MCF 10A (cell line): ENCODE measurements at regions of chr3 and their contacts with region 1.

Region 1: GRCh38 chr3:36444909-36445308 is 64.6 kb downstream of the STAC start:
- DNase-seq: peak; percentile 29
- H3K4me3 Mint-ChIP-seq: no peak overlapping the region
- H3K27ac Mint-ChIP-seq: peak overlapping the region; percentile 94
- H3K4me1 Mint-ChIP-seq: peaks cover 17% of the 10 kb centered on the region
- H3K27me3 Mint-ChIP-seq: no peaks in the 10 kb centered on the region
- CTCF ChIP-seq: no peak

Region 2: GRCh38 chr3:35992041-35992440 is 452.9 kb before region 1 on chr3:
- CTCF ChIA-PET with region 1: no interaction called
- POLR2A ChIA-PET with region 1: no interaction called
- intact Hi-C with region 1: no loop called
- DNase-seq: no peak
- H3K4me3 Mint-ChIP-seq: no peak overlapping the region
- H3K27ac Mint-ChIP-seq: no peak overlapping the region
- H3K4me1 Mint-ChIP-seq: no peaks in the 10 kb centered on the region
- H3K27me3 Mint-ChIP-seq: peaks cover 17% of the 10 kb centered on the region
- CTCF ChIP-seq: no peak

Region 3: DNA sequence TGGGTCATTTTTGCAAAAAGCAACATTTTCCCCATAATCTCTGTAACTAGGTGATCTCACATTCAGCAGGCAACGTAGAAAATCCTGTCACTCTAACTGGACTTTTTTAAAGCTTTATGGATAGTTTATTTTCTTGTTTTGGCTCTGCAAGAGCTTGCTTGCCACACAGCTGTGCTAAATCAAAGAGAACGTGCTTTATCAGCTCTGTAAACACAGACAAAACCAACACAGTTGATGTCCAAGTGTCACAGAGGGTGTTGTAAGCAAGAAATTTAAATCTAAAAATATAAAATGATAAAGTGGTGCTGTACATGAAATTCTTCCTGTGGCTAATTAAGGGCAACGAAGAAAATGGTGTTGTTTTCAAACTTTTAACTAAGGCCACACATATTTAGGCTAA is 162.1 kb before region 1 on chr3:
- CTCF ChIA-PET with region 1: no interaction called
- POLR2A ChIA-PET with region 1: no interaction called
- intact Hi-C with region 1: no loop called
- DNase-seq: no peak
- H3K4me3 Mint-ChIP-seq: no peak overlapping the region
- H3K27ac Mint-ChIP-seq: no peak overlapping the region
- H3K4me1 Mint-ChIP-seq: no peaks in the 10 kb centered on the region
- H3K27me3 Mint-ChIP-seq: peaks cover 17% of the 10 kb centered on the region
- CTCF ChIP-seq: no peak

Region 4: GRCh38 chr3:36416599-36416998 is 28.3 kb before region 1 on chr3:
- CTCF ChIA-PET with region 1: no interaction called
- POLR2A ChIA-PET with region 1: no interaction called
- intact Hi-C with region 1: no loop called
- DNase-seq: no peak
- H3K4me3 Mint-ChIP-seq: no peak overlapping the region
- H3K27ac Mint-ChIP-seq: no peak overlapping the region
- H3K4me1 Mint-ChIP-seq: no peaks in the 10 kb centered on the region
- H3K27me3 Mint-ChIP-seq: no peaks in the 10 kb centered on the region
- CTCF ChIP-seq: no peak

Region 5: GRCh38 chr3:36496684-36497633 is 52.0 kb after region 1 on chr3:
- CTCF ChIA-PET with region 1: no interaction called
- POLR2A ChIA-PET with region 1: no interaction called
- intact Hi-C with region 1: loop called (anchors 2 kb)
- DNase-seq: peak; percentile 64
- H3K4me3 Mint-ChIP-seq: no peak overlapping the region
- H3K27ac Mint-ChIP-seq: peak overlapping the region; percentile 59
- H3K4me1 Mint-ChIP-seq: peaks cover 40% of the 10 kb centered on the region
- H3K27me3 Mint-ChIP-seq: no peaks in the 10 kb centered on the region
- CTCF ChIP-seq: no peak